Cardiac septum (tissue), 1 donor: ENCODE measurements at regions of chr3 and their contacts with region 1.

Region 1: DNA sequence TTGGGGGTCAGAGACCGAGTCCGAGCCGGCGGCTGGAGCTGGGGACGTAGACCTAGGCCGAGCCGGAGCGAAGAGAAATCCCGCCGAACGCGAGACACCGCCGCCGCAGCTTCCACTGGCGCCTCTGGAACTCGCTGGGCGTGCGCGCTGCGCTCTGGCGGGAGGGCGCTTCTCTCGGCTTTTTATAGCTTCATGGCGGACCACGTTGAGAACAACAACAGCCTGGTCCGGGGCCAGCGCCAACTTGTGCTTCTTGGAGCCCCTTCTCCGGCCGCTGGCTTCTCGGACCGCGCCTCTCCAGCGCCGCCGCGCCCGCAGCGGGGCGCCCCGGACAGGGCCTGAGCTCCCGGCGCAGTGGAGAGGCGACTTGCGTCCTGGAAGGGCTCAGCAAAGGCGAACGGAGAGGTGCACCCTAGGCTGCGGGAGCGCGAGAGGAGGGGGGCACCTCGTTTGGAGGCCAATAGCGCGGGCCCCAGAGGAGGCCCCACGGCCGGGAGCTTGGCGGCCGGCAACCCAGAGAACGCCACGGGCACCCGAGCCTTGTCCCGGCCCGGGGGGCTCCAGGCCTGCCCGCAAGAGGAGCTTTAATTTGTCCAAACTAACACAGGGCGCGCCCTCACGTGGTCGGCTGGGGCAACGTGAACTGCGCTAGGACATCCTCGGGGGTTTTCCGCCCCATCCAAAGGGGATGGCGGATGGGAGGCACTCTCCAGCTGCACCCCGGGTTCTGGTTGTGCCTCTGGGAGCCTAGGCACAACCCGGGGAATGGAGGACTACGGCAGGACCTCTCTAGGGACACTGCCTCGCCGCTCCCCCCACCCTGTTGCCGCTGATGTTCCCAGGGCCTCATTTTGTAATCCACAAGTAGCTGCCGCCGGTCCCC is 37.7 kb downstream of the HMCES start:
- DNase-seq: peak; percentile 92

Region 2: DNA sequence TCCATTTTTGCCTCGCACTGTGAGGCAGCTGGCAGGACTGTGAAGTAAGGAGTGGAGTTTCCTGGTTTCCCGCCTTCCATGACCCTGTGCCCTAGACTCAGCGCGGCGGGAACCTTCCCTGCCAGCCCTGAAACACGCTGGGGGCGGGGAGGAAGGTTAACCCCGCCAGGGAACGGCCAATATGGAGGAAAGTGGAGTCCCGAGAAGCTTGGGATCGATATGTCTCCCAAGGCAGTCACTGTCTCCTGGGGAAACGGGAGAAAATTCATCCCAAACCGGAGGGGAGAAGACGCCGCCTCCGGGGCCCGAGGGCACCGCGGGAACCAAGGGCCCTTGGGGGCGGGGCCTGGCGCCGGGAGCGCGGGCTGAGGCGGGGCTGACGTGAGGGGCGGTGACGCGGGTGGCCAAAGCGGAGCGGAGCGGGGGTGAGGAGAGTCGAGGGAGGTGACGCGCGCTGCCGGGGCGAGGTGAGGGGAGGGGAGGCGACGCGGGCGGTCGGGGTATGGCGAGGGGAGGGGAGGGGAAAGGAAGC is 37.9 kb before region 1 on chr3 and contains the start of gene HMCES:
- intact Hi-C with region 1: loop called (anchors 2 kb)
- DNase-seq: peak; percentile 98
- total RNA-seq, gene HMCES: 32.9 TPM

Region 3: DNA sequence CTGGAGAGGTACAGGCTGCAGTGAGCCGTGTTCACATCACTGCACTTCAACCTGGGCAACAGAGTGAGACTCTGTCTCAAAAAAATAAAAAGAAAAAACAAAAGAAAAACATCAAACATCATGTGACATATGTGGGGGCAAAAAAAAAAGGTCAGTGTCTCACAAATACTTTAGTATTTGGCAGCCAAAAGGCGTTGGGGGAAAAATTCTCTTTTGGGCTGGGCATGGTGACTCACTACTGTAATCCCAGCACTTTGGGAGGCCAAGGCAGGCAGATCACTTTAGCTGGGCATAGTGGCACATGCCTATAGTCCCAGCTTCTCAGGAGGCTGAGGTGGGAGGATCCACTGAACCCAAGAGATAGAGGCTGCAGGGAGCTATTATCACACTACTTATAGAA is 529.6 kb after region 1 on chr3:
- intact Hi-C with region 1: no loop called
- DNase-seq: no peak